ENCODE measurements at regions of chr2 and their contacts with region 1.

Region 1: DNA sequence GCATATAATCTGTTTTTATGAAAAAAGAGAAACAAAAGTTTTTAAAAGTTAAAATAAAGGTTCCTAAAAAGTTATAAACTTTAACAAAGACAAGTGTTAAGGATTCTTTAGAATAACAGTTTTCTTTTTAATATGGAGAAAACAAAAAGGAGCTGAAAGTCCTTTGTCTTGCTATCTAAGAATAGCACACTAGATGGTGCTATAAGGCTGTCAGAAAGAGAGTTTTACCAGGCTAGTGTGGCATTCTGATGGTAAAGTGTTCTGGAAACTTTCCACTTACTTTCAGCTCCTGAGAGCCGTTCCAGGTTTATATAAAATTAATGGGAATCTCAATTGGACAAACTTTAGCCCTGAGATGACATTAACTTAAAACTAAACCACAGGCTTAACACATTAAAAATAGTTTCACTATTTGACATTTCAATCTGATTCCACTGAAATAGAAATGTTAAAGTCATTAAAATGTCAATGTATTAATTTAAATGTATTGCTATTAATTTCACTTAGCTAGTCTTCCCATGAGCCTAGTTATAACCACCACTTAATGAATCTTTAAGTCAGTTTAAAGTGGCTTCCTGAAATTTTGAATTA is 3.7 kb downstream of the FBXO48 start:
- DNase-seq: peak; percentile 31
- H3K4me3 Mint-ChIP-seq: no peak overlapping the region
- H3K27ac Mint-ChIP-seq: no peak overlapping the region
- H3K4me1 Mint-ChIP-seq: peaks cover 33% of the 10 kb centered on the region
- H3K27me3 Mint-ChIP-seq: no peaks in the 10 kb centered on the region

Region 2: GRCh38 chr2:68452168-68452900 is 11.0 kb before region 1 on chr2:
- CTCF ChIA-PET with region 1: interaction called, 12 read pairs
- POLR2A ChIA-PET with region 1: no interaction called
- DNase-seq: no peak
- H3K4me3 Mint-ChIP-seq: no peak overlapping the region
- H3K27ac Mint-ChIP-seq: no peak overlapping the region
- H3K4me1 Mint-ChIP-seq: peaks cover 8% of the 10 kb centered on the region
- H3K27me3 Mint-ChIP-seq: no peaks in the 10 kb centered on the region